PC-3 (cell line): ENCODE measurements at regions of chr7 and their contacts with region 1.

Region 1: GRCh38 chr7:86991771-86992191 is 67.7 kb downstream of the ELAPOR2 start:
- DNase-seq: peak; percentile 4
- ATAC-seq: peak; percentile 27; the same call in 1 of the 2 replicates
- H3K4me3 ChIP-seq: no peak overlapping the region
- H3K27ac ChIP-seq: no peak overlapping the region
- H3K4me1 ChIP-seq: no peaks in the 10 kb centered on the region
- H3K27me3 ChIP-seq: no peaks in the 10 kb centered on the region
- CTCF ChIP-seq: no peak

Region 2: GRCh38 chr7:86939197-86939814 is 52.5 kb before region 1 on chr7:
- CTCF ChIA-PET with region 1: no interaction called
- POLR2A ChIA-PET with region 1: no interaction called
- intact Hi-C with region 1: loop called (anchors 1 kb)
- DNase-seq: peak; percentile 87
- ATAC-seq: peak; percentile 52
- H3K4me3 ChIP-seq: no peak overlapping the region
- H3K27ac ChIP-seq: no peak overlapping the region
- H3K4me1 ChIP-seq: peaks cover 11% of the 10 kb centered on the region; the same call in 1 of the 2 replicates
- H3K27me3 ChIP-seq: no peaks in the 10 kb centered on the region
- CTCF ChIP-seq: peak; percentile 84

Region 3: GRCh38 chr7:87038993-87039716 is 47.4 kb after region 1 on chr7:
- CTCF ChIA-PET with region 1: no interaction called
- POLR2A ChIA-PET with region 1: no interaction called
- intact Hi-C with region 1: loop called (anchors 5 kb)
- DNase-seq: peak; percentile 30
- ATAC-seq: peak; percentile 80
- H3K4me3 ChIP-seq: peak overlapping the region; percentile 83
- H3K27ac ChIP-seq: peak overlapping the region; percentile 28
- H3K4me1 ChIP-seq: peaks cover 7% of the 10 kb centered on the region; the same call in 1 of the 2 replicates
- H3K27me3 ChIP-seq: no peaks in the 10 kb centered on the region
- CTCF ChIP-seq: no peak